PC-9 (cell line): ENCODE measurements at regions of chr19 and their contacts with region 1.

Region 1: GRCh38 chr19:4867534-4868285 is at the start of gene PLIN3:
- DNase-seq: peak; percentile 69 to 90
- H3K4me3 ChIP-seq: peak within 1 kb of the TSS; percentile 89
- H3K27ac ChIP-seq: peak within 1 kb of the TSS; percentile 88
- H3K4me1 ChIP-seq: peaks cover 17% of the 10 kb centered on the region
- H3K27me3 ChIP-seq: no peaks in the 10 kb centered on the region
- CTCF ChIP-seq: no peak
- total RNA-seq, gene PLIN3: 95.9 and 104 TPM in 2 replicates

Region 2: GRCh38 chr19:4815426-4816201 is 52.1 kb before region 1 on chr19:
- CTCF ChIA-PET with region 1: no interaction called
- POLR2A ChIA-PET with region 1: interaction called, 3 read pairs
- intact Hi-C with region 1: loop called (anchors 2 kb)
- DNase-seq: peak; percentile 69 to 74
- H3K4me3 ChIP-seq: peak overlapping the region; percentile 52; the same call in 1 of the 2 replicates
- H3K27ac ChIP-seq: no peak overlapping the region
- H3K4me1 ChIP-seq: no peaks in the 10 kb centered on the region
- H3K27me3 ChIP-seq: no peaks in the 10 kb centered on the region
- CTCF ChIP-seq: no peak

Region 3: DNA sequence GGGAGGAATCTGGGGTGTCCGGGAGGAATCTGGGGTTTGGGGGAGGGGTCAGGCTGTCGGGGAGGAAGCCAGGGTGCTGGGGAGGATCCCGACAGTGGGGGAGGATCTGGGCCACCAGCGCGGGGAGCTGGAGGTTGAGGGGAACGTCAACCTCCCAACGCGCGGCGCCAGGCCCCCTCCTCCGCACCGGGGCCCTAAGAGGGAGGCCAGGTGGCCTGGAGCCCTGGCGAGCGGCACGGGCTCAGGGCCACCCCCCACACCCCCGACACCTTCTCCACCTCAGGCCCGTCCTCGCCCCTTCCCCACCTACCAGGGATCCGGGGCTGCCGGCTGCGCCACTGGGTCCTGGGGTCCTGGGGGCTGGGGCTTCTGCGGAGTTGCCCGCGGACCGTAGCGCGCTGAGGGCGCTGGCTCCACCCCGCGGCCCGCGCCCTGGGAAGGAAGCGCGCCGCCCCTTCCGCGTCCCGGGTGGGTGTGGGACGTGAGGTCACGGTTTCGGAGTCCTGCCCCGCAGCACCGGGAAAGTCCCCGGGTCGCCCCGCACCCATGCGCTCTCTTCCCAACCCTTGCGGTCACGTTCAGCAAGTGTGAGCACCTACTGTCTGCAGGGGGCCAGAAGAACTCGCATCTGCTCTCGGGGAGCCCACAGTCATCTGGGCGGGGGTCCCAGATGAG is 36.3 kb before region 1 on chr19 and contains the start of gene TICAM1:
- CTCF ChIA-PET with region 1: no interaction called
- POLR2A ChIA-PET with region 1: interaction called, 23 read pairs
- intact Hi-C with region 1: no loop called
- DNase-seq: peak; percentile 38 to 43
- H3K4me3 ChIP-seq: peak within 1 kb of the TSS; percentile 81
- H3K27ac ChIP-seq: peak within 1 kb of the TSS; percentile 54
- H3K4me1 ChIP-seq: no peaks in the 10 kb centered on the region
- H3K27me3 ChIP-seq: no peaks in the 10 kb centered on the region
- CTCF ChIP-seq: no peak
- total RNA-seq, gene TICAM1: 9.9 and 12.7 TPM in 2 replicates

Region 4: DNA sequence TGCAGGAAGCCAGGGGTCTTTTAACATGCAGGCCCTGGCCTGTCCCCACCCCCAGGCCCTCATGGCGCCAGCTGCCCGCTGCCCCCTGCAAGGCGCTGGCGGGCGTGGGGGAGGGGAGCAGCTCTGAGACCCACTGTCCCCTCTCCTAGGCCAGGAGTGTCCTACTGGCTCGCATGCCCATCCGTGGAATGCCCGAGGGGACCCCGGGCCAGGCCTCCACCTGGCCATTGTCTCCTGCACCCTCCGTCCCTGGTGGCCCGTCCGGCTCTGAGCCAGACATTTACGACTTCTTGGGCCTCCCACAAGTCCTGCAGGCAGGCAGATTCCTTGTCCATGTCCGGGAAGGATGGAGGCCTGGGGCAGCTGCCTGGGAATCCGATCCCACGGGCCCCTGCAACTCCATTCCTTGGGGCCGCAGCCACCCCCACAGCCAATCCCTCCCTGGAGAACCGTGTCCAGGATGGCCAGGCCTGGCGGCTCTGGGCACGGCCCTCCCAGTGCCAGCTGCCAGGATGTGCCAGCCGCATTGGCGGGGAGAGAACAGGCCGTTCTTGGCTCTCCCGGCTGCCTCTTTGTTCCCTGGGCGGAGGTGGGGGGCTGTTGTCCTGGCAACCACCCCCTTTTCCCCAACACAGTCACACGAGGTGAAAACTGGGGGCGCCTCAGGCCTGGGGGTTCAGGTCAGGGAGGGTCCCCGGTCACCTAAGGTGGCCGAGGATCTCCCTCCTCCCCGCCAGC is 10.2 kb after region 1 on chr19:
- CTCF ChIA-PET with region 1: no interaction called
- POLR2A ChIA-PET with region 1: interaction called, 12 read pairs
- intact Hi-C with region 1: no loop called
- DNase-seq: no peak
- H3K4me3 ChIP-seq: no peak overlapping the region
- H3K27ac ChIP-seq: no peak overlapping the region
- H3K4me1 ChIP-seq: no peaks in the 10 kb centered on the region
- H3K27me3 ChIP-seq: no peaks in the 10 kb centered on the region
- CTCF ChIP-seq: no peak

Region 5: GRCh38 chr19:4896372-4896771 is 28.7 kb after region 1 on chr19:
- CTCF ChIA-PET with region 1: no interaction called
- POLR2A ChIA-PET with region 1: interaction called, 21 read pairs
- intact Hi-C with region 1: no loop called
- DNase-seq: peak; percentile 53 to 63
- H3K4me3 ChIP-seq: no peak overlapping the region
- H3K27ac ChIP-seq: peak overlapping the region; percentile 80
- H3K4me1 ChIP-seq: peaks cover 15% of the 10 kb centered on the region
- H3K27me3 ChIP-seq: no peaks in the 10 kb centered on the region
- CTCF ChIP-seq: no peak

Region 6: DNA sequence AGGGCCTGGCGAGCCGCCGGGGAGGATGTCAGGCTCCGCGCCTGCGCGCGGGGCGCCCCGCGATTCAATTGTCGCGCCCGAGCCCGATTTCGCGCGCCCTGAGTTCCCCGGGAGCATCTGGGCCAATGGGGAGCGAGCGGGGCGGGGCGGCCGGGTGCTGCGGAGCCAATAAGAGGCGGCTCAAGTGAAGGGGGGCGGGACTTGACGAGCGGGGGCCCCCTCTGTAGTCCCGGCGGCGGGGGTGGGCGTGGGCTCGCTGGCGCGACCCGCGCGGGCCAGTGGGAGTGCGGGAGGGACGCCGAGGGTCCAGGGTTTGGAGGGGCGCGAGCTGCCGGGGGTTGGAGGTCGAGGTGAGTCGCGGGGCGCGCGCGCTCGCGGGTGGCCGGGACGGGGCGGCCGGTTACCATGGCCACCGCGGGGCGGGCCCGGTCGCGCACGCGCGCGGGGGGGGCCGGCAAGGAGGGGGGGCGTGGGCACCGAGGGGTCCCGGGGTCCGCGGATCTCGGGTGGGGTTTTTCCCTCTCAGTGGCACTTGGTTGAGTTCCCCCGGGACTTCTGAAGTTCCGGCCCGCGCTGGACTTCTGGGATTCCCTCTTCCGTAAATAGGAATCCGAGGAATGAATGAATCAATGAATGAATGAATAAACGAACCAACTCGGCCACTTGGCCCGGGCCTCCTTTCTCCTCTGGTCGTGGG is 42.3 kb after region 1 on chr19:
- CTCF ChIA-PET with region 1: interaction called, 27 read pairs
- POLR2A ChIA-PET with region 1: no interaction called
- intact Hi-C with region 1: loop called (anchors 1 kb)
- DNase-seq: peak; percentile 72 to 85
- H3K4me3 ChIP-seq: peak overlapping the region; percentile 55
- H3K27ac ChIP-seq: peak overlapping the region; percentile 84
- H3K4me1 ChIP-seq: peaks cover 41% of the 10 kb centered on the region
- H3K27me3 ChIP-seq: no peaks in the 10 kb centered on the region
- CTCF ChIP-seq: no peak

Region 7: DNA sequence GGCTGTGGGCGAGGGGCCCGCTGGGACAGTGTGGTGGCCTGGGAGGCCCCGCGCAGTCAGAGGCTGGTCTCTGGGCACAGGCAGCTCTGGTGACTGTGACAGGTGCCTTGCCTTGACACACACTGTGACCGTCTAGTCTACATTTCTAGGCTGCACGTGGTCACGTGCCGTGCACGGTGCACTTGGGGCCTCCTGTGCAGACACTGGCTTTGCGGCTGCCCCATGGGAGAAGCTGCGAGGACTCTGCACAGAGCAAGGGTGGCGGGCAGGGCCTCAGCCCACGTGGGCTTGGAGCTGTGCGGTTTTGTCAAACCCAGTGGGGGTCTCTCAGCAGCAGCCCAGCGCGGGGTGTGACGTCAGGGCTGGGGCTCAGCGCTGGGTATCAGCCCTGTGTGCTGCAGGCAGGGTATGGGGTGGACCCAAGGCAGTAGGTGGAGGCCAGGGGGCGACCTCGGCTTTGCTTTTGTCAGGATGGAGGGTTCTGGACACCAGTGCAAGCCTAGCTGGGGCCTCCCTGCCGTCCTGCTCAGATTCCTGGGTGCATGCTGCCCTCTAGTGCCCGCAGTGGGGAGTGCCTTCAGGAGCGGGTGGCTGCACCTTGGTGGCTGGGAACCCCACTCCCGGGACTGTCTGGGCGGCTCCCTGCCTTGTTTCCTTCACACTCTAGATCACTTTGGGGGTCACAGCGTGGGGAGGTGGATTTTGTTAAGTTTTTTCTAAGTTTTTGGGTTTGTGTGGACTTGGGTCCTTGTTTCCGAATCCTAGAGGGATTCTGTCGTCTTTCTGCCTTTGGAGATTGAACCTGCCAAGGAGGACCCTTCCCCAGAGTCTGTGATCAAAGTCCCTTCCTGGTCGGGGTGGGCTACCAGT is 163.8 kb after region 1 on chr19:
- CTCF ChIA-PET with region 1: interaction called, 3 read pairs
- POLR2A ChIA-PET with region 1: no interaction called
- intact Hi-C with region 1: loop called (anchors 5 kb)
- DNase-seq: peak; percentile 40 to 76
- H3K4me3 ChIP-seq: no peak overlapping the region
- H3K27ac ChIP-seq: no peak overlapping the region
- H3K4me1 ChIP-seq: no peaks in the 10 kb centered on the region
- H3K27me3 ChIP-seq: no peaks in the 10 kb centered on the region
- CTCF ChIP-seq: peak; percentile 89